ENCODE measurements at regions of chr12 and their contacts with region 1.

Region 1: DNA sequence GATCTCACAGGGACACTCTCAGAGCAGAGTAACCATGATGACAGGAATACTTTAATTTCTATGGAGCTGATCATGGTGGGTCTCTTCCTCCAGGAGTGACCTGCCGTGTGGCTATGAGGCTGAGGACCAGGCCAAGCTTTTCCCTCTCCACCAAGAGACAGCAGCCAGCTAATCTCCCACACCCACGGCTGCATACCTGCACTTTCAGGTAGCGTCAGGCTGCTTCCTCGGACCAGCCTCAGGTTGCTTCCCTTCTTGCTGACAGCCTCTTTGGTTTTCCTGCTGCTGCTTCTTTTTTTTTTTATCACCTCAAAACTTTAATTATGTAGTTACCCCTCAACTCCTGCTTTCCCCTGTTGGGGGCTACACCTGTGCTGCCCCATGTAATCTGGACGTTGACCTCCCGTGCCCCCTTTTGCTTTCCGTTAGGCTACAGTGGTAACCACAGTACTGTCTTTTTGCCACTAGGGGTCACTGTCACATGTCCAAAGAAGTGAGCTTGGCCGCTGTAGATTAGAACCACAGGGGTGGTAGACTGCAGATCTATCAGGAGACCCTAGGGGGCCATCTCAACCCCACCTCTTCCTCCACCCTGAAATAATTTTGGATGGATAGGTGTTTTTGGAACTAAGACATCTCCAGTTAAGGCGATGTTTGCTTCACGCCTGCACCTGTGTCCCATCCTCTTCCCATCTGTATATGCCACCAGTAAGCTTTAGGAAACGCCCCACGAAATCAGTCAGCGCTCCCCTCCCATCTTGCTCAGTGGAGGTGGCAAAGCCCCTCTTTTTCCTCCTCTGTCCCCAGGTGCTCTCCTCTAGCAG is 7.8 kb upstream of the PIP4K2C start:
- DNase-seq: peak; percentile 70
- H3K4me3 ChIP-seq: no peak overlapping the region
- H3K27ac ChIP-seq: no peak overlapping the region
- H3K4me1 ChIP-seq: no peaks in the 10 kb centered on the region
- H3K27me3 ChIP-seq: no peaks in the 10 kb centered on the region
- CTCF ChIP-seq: peak; percentile 94

Region 2: DNA sequence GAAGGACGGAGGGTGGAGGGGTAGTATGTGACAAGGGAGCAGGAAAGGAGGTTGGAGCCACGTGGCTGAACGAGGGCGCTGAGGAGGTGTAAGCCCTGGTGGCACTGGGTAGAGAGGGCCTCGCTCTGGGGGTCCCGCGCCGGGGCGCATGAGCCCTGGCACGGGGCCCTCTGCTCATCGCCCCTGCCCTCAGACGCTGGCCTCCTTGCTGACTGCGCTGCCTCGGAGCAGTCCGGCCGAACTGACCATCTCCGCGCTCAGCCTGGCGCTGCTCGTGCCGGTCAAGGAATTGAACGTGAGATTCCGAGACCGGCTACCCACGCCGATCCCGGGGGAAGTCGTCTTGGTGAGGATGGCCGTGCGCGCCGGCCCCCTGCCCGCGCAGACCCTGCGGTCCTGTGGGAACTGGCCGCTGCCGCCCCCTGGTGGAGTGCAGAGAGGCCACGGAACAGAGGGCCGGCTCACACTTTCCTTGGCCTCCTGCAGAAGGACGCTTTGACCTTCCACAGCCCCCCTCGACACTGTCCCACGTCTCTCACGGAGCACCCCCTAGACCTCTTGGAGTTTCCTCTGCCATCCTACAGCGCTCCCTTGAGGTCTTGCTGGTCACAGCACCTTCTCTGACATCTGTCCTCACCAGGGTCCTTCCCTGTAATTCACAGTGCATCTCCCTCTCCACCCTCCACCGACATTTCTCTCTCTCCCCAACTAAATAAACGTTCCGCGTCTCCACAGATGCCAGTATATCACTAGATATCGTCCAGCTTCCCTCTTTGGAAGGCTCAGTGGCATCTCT is 38.5 kb after region 1 on chr12:
- intact Hi-C with region 1: loop called (anchors 2 kb)
- DNase-seq: peak; percentile 50
- H3K4me3 ChIP-seq: peak overlapping the region; percentile 37
- H3K27ac ChIP-seq: no peak overlapping the region
- H3K4me1 ChIP-seq: peaks cover 11% of the 10 kb centered on the region
- H3K27me3 ChIP-seq: peaks cover 55% of the 10 kb centered on the region
- CTCF ChIP-seq: peak; percentile 94

Region 3: DNA sequence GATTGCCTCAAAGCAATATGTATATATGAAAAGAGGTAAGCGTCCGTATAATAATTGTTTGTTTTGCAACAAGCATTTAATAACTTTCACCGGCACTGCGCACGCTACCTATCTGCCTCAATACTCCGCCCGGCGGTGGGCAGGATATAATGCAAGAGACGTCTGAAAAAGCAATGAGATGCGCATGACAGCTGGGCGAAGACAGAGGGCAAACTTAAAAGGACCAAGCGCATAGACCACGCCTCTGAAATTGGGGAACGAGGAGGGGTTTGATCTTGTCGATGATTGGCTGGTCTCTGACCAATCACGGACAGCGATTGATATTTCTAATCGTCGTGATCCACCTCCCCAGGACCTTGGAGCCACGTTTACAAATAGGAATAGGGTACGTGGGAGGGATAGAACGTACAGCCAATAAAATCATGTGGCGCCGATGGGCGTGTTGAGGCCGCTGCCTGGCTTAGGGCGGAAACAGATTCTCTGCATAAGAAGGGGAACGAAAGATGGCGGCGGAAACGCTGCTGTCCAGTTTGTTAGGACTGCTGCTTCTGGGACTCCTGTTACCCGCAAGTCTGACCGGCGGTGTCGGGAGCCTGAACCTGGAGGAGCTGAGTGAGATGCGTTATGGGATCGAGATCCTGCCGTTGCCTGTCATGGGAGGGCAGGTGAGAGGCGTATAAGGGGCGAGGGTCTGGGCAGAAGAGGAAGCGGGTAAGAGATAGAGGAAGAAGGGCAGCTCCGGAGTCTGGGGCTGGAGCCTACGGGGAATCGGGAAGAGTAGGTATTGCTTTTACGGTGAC is 110.6 kb after region 1 on chr12 and contains the start of gene OS9:
- intact Hi-C with region 1: loop called (anchors 5 kb)
- DNase-seq: peak; percentile 98
- H3K4me3 ChIP-seq: peak within 1 kb of the TSS; percentile 79
- H3K27ac ChIP-seq: peak within 1 kb of the TSS; percentile 69
- H3K4me1 ChIP-seq: peaks cover 6% of the 10 kb centered on the region
- H3K27me3 ChIP-seq: peaks cover under 1% of the 10 kb centered on the region
- CTCF ChIP-seq: peak; percentile 78
- total RNA-seq, gene OS9: 219 to 284 TPM